ENCODE measurements at regions of chr16 and their contacts with region 1.

Region 1: GRCh38 chr16:84284154-84284722 is 10.4 kb upstream of the WFDC1 start:
- DNase-seq: peak; percentile 62 to 73
- ATAC-seq: peak; percentile 71 to 85 (median 80)
- H3K4me3 ChIP-seq: no peak overlapping the region
- H3K27ac ChIP-seq: peak overlapping the region in 9 of 10 donors; percentile 14 to 65 (median 49)
- H3K4me1 ChIP-seq: peaks cover 3 to 36% (median 26%) of the 10 kb centered on the region in 9 donors
- H3K27me3 ChIP-seq: no peaks in the 10 kb centered on the region
- CTCF ChIP-seq: no peak

Region 2: GRCh38 chr16:84228321-84228838 is 55.9 kb before region 1 on chr16:
- intact Hi-C with region 1: loop called in 1 of 10 experiments (anchors 10 kb)
- DNase-seq: peak; percentile 77 to 80
- ATAC-seq: peak; percentile 89 to 94 (median 93)
- H3K4me3 ChIP-seq: no peak overlapping the region
- H3K27ac ChIP-seq: peak overlapping the region in 3 of 10 donors; percentile 21 to 47 (median 26)
- H3K4me1 ChIP-seq: peaks cover 0 to 21% (median 11%) of the 10 kb centered on the region in 9 donors
- H3K27me3 ChIP-seq: peaks cover 0 to 7% (median 0%) of the 10 kb centered on the region in 7 donors
- CTCF ChIP-seq: no peak

Region 3: GRCh38 chr16:84303023-84303422 is 18.8 kb after region 1 on chr16:
- intact Hi-C with region 1: loop called in 1 of 10 experiments (anchors 2 kb)
- DNase-seq: peak in 1 of 2 donors; percentile 47
- ATAC-seq: peak in 7 of 8 donors; percentile 56 to 85 (median 75)
- H3K4me3 ChIP-seq: peak overlapping the region in 1 of 10 donors; percentile 11
- H3K27ac ChIP-seq: peak overlapping the region in 7 of 10 donors; percentile 16 to 68 (median 63)
- H3K4me1 ChIP-seq: peaks cover 0 to 23% (median 8%) of the 10 kb centered on the region in 9 donors
- H3K27me3 ChIP-seq: peaks cover 0 to 23% (median 12%) of the 10 kb centered on the region in 7 donors
- CTCF ChIP-seq: no peak